Aorta (tissue), 5 donors: ENCODE measurements at regions of chr7 and their contacts with region 1.

Region 1: GRCh38 chr7:132422502-132423111 is 153.7 kb downstream of the PLXNA4 start:
- DNase-seq: no peak
- ATAC-seq: peak; percentile 35
- H3K4me3 ChIP-seq: no peak overlapping the region
- H3K27ac ChIP-seq: no peak overlapping the region
- H3K4me1 ChIP-seq: peaks cover 0 to 2% of the 10 kb centered on the region in 2 donors
- H3K27me3 ChIP-seq: no peaks in the 10 kb centered on the region

Region 2: GRCh38 chr7:132351954-132352499 is 70.6 kb before region 1 on chr7:
- intact Hi-C with region 1: loop called in 1 of 2 experiments (anchors 5 kb)
- DNase-seq: peak; percentile 82 to 83
- ATAC-seq: peak; percentile 44
- H3K4me3 ChIP-seq: peak overlapping the region in 1 of 2 donors; percentile 8
- H3K27ac ChIP-seq: peak overlapping the region; percentile 50 to 84
- H3K4me1 ChIP-seq: no peaks in the 10 kb centered on the region
- H3K27me3 ChIP-seq: no peaks in the 10 kb centered on the region

Region 3: DNA sequence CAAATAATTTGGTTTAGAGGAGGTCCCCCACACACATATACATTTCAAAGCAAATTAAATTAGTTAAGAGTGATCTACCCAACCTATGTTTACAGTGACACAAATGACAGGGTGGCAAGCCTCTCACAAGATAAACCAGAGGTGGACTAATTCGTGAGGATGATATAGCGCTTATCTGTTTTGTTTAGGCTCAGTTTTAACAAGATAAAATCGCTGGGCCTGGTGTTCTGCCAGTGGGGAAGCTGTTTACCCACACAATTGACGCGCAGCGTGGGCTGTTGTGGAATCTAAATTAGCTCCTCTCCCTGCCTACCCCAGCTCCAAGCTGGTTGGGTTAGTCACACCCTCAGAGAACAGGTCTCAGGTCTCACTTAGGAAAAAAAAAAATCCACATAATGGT is 170.3 kb after region 1 on chr7:
- intact Hi-C with region 1: no loop called
- DNase-seq: no peak
- ATAC-seq: no peak
- H3K4me3 ChIP-seq: no peak overlapping the region
- H3K27ac ChIP-seq: no peak overlapping the region
- H3K4me1 ChIP-seq: no peaks in the 10 kb centered on the region
- H3K27me3 ChIP-seq: peaks cover 0 to 2% of the 10 kb centered on the region in 2 donors

Region 4: DNA sequence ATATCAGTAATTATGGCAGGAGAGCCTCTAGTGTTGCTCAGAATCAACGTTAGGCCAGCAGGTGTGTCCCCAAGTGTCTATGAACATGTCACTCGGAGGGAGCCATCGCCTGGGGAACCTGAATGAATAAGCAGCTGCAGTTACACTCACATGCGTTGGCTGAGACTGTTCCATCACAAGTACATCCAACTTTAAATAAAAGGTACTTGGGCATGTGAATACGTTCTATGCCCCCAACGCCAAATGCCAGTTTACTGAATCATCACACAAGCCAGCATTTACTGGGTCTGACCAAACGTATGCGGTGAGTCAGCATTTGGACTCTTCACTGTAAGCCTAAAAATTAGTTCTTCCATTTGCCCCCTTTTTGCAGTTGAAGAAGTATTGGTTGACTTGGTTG is 361.2 kb after region 1 on chr7:
- intact Hi-C with region 1: no loop called
- DNase-seq: no peak
- ATAC-seq: no peak
- H3K4me3 ChIP-seq: no peak overlapping the region
- H3K27ac ChIP-seq: no peak overlapping the region
- H3K4me1 ChIP-seq: no peaks in the 10 kb centered on the region
- H3K27me3 ChIP-seq: no peaks in the 10 kb centered on the region